Dorsolateral prefrontal cortex (tissue), 120 donors: ENCODE measurements at regions of chr6 and their contacts with region 1.

Region 1: GRCh38 chr6:152636609-152637295 is 410 bp downstream of the SYNE1 start:
- DNase-seq: peak in 6 of 10 donors; percentile 14 to 67 (median 57)
- H3K4me3 ChIP-seq: peak overlapping the region; percentile 49 to 84 (median 71)
- H3K27ac ChIP-seq: peak overlapping the region in 58 of 59 donors; percentile 39 to 96 (median 85)
- H3K27me3 ChIP-seq: no peaks in the 10 kb centered on the region
- CTCF ChIP-seq: no peak

Region 2: DNA sequence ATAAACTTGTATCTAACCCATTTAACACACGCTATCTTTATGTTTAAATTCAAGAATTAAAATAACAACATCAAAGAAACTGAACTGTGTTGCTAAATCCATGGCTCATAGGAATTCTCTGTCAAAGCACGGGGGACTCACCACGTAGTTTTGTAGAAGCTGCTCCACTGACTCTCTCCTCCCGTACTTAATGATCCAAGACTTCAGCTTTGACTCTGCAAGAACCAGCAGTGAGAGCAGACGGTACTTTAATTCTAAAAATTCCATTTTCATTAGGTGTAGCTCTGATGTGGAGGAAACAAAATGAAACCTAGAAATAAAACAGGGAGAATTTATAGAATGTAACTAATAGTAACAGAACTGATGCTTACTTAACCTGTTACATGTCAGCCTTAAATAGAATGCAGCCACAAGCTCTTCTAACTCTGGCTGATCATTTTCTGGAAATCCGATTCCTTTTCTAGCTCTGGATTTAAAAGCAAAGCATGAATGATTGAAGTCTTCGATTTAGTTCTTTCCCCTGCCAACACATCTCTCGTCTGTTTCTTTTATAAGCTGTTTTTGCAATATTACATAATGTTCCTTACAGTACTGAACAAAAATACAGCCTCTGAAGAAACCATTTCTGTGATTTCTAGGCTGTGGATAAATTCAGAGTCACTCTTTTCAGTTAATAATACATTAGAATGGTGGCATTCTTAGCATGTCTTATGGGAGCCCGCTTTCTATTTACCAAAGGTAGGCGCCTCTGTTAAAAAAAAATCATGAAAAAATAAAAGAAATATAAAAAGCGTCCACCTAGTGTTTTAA is 165.1 kb before region 1 on chr6:
- intact Hi-C with region 1: loop called in 1 of 2 experiments (anchors 10 kb)
- DNase-seq: no peak
- H3K4me3 ChIP-seq: peak overlapping the region; percentile 5 to 62 (median 40)
- H3K27ac ChIP-seq: peak overlapping the region in 46 of 59 donors; percentile 1 to 74 (median 53)
- H3K27me3 ChIP-seq: no peaks in the 10 kb centered on the region
- CTCF ChIP-seq: no peak

Region 3: GRCh38 chr6:152566103-152566875 is 70.5 kb before region 1 on chr6:
- intact Hi-C with region 1: loop called in 1 of 2 experiments (anchors 10 kb)
- DNase-seq: peak in 1 of 10 donors; percentile 47
- H3K4me3 ChIP-seq: peak overlapping the region in 2 of 59 donors; percentile 2 to 7
- H3K27ac ChIP-seq: peak overlapping the region in 19 of 59 donors; percentile 1 to 87 (median 21)
- H3K27me3 ChIP-seq: no peaks in the 10 kb centered on the region
- CTCF ChIP-seq: no peak